ENCODE measurements at regions of chr19 and their contacts with region 1.

Region 1: GRCh38 chr19:4065430-4066175 is 1.1 kb downstream of the ZBTB7A start:
- DNase-seq: peak; percentile 97 to 99 (median 98)
- ATAC-seq: peak; percentile 89
- H3K4me3 ChIP-seq: no peak overlapping the region
- H3K4me3 Mint-ChIP-seq: peak overlapping the region; percentile 29 to 90 (median 67)
- H3K27ac ChIP-seq: peak overlapping the region; percentile 95
- H3K27ac Mint-ChIP-seq: peak overlapping the region in 6 of 9 donors; percentile 12 to 86 (median 66)
- H3K4me1 ChIP-seq: peaks cover 41 to 56% of the 10 kb centered on the region in 2 donors
- H3K4me1 Mint-ChIP-seq: peaks cover under 1 to 42% (median 26%) of the 10 kb centered on the region in 7 donors
- H3K27me3 ChIP-seq: no peaks in the 10 kb centered on the region
- H3K27me3 Mint-ChIP-seq: no peaks in the 10 kb centered on the region

Region 2: DNA sequence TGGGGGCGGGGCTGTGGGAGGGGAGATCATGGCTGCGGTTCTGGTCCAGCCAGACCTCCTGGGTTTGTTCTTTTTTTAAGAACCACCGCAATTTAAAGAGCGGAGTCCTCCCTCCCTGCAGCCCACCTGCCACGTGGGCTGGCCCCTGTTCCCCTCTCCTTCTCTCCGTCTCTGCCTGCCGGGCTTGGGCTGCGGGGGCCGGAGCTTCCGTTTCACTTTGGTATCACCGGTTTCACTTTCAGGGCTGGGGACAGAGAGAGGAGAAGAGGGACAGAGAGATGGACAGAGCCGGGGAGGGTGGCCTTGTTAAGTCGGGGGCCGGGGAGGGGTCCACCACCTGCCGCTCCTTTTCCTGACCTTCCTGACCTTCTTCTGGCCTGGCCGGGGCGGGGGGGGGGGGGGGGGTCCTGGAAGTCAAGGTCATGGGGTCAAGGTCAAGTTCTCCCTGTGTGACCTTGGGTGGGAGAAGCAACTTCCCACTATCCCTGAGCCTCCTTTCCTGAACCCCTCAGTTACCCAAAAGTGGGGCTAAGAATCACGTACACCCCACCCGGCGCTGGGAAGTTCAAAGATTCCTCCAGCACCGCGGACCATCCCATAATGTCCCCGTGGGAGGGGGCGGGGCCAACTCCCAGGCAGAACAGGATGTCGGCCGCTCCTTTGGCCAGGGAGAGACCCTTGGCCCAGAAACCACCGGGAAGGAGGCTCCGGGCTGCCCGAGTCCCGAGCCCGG is 12.4 kb after region 1 on chr19:
- CTCF ChIA-PET with region 1: no interaction called
- POLR2A ChIA-PET with region 1: interaction called, 3 read pairs
- intact Hi-C with region 1: loop called in 1 of 2 experiments (anchors 1 kb)
- DNase-seq: peak in 7 of 9 donors; percentile 35 to 70 (median 47)
- ATAC-seq: peak; percentile 71
- H3K4me3 ChIP-seq: peak overlapping the region; percentile 68
- H3K4me3 Mint-ChIP-seq: peak overlapping the region; percentile 82 to 89 (median 87)
- H3K27ac ChIP-seq: peak overlapping the region; percentile 86
- H3K27ac Mint-ChIP-seq: peak overlapping the region; percentile 85 to 97 (median 88)
- H3K4me1 ChIP-seq: peaks cover 15 to 24% of the 10 kb centered on the region in 2 donors
- H3K4me1 Mint-ChIP-seq: peaks cover 17 to 46% (median 33%) of the 10 kb centered on the region in 7 donors
- H3K27me3 ChIP-seq: no peaks in the 10 kb centered on the region
- H3K27me3 Mint-ChIP-seq: no peaks in the 10 kb centered on the region

Region 3: DNA sequence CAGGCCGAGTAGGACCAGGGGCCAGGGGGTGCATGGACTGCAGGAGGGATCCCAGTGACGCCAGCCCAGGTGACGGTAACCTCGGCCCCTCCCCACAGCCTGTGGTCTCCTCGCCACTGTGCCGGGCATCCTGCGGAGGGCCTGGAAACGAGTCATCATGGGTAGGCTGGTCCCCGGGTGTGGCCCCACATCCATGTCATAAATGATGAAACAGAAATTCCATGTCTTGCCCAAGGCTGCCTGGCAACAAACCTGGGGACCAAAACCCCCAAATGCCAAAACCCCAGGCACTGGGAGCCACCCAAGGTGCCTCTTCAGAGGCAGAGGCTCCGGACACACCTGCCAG is 37.4 kb after region 1 on chr19:
- CTCF ChIA-PET with region 1: interaction called, 6 read pairs
- POLR2A ChIA-PET with region 1: interaction called, 36 read pairs
- intact Hi-C with region 1: loop called (anchors 1 to 5 kb)
- DNase-seq: no peak
- ATAC-seq: no peak
- H3K4me3 ChIP-seq: no peak overlapping the region
- H3K4me3 Mint-ChIP-seq: peak overlapping the region in 1 of 10 donors; percentile 67
- H3K27ac ChIP-seq: no peak overlapping the region
- H3K27ac Mint-ChIP-seq: peak overlapping the region in 2 of 9 donors; percentile 64 to 85
- H3K4me1 ChIP-seq: peaks cover 22 to 33% of the 10 kb centered on the region in 2 donors
- H3K4me1 Mint-ChIP-seq: peaks cover 20 to 44% (median 32%) of the 10 kb centered on the region in 7 donors
- H3K27me3 ChIP-seq: no peaks in the 10 kb centered on the region
- H3K27me3 Mint-ChIP-seq: no peaks in the 10 kb centered on the region

Region 4: GRCh38 chr19:4115050-4115817 is 49.6 kb after region 1 on chr19:
- CTCF ChIA-PET with region 1: interaction called, 3 read pairs
- POLR2A ChIA-PET with region 1: interaction called, 10 read pairs
- intact Hi-C with region 1: no loop called
- DNase-seq: peak in 8 of 9 donors; percentile 46 to 78 (median 66)
- ATAC-seq: peak; percentile 99
- H3K4me3 ChIP-seq: no peak overlapping the region
- H3K4me3 Mint-ChIP-seq: peak overlapping the region; percentile 52 to 81 (median 72)
- H3K27ac ChIP-seq: peak overlapping the region; percentile 57
- H3K27ac Mint-ChIP-seq: peak overlapping the region; percentile 64 to 93 (median 83)
- H3K4me1 ChIP-seq: peaks cover 17 to 24% of the 10 kb centered on the region in 2 donors
- H3K4me1 Mint-ChIP-seq: peaks cover 14 to 60% (median 33%) of the 10 kb centered on the region in 7 donors
- H3K27me3 ChIP-seq: no peaks in the 10 kb centered on the region
- H3K27me3 Mint-ChIP-seq: no peaks in the 10 kb centered on the region

Region 5: DNA sequence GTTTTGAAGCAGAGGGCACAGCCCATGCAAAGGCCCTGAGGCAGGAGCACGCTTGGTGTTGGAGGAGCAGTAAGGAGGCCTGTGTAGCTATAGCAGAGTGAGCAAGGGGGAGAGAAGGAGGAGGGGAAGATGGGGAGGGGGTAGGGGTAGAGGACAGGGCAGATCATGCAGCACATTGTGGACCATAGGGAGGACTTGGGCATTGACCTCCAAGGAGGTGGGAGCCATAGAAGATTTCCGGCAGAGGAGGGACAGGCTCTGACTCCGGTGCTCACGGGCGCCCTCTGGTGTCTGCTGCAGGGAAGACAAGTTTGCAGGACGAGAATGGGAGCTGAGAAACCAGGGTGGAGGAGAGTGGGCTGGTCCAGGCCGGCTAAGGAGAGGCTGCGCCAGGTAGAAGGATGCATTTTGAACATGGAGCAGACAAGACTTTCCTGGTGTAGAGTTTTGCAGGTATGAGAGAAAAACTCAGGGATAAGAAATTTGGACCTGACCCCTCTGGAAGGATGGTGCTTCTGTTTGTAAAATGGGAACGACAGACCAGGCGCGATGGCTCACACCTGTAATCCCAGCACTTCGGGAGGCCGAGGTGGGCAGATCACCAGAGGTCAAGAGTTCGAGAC is 74.1 kb after region 1 on chr19:
- CTCF ChIA-PET with region 1: no interaction called
- POLR2A ChIA-PET with region 1: interaction called, 4 read pairs
- intact Hi-C with region 1: loop called in 1 of 2 experiments (anchors 1 kb)
- DNase-seq: peak; percentile 64 to 92 (median 82)
- ATAC-seq: peak; percentile 96
- H3K4me3 ChIP-seq: no peak overlapping the region
- H3K4me3 Mint-ChIP-seq: peak overlapping the region in 9 of 10 donors; percentile 14 to 64 (median 30)
- H3K27ac ChIP-seq: no peak overlapping the region
- H3K27ac Mint-ChIP-seq: peak overlapping the region in 1 of 9 donors; percentile 32
- H3K4me1 ChIP-seq: peaks cover 0 to 6% of the 10 kb centered on the region in 2 donors
- H3K4me1 Mint-ChIP-seq: peaks cover 5 to 11% (median 10%) of the 10 kb centered on the region in 7 donors
- H3K27me3 ChIP-seq: no peaks in the 10 kb centered on the region
- H3K27me3 Mint-ChIP-seq: peaks cover 4 to 11% (median 6%) of the 10 kb centered on the region in 5 donors

Region 6: DNA sequence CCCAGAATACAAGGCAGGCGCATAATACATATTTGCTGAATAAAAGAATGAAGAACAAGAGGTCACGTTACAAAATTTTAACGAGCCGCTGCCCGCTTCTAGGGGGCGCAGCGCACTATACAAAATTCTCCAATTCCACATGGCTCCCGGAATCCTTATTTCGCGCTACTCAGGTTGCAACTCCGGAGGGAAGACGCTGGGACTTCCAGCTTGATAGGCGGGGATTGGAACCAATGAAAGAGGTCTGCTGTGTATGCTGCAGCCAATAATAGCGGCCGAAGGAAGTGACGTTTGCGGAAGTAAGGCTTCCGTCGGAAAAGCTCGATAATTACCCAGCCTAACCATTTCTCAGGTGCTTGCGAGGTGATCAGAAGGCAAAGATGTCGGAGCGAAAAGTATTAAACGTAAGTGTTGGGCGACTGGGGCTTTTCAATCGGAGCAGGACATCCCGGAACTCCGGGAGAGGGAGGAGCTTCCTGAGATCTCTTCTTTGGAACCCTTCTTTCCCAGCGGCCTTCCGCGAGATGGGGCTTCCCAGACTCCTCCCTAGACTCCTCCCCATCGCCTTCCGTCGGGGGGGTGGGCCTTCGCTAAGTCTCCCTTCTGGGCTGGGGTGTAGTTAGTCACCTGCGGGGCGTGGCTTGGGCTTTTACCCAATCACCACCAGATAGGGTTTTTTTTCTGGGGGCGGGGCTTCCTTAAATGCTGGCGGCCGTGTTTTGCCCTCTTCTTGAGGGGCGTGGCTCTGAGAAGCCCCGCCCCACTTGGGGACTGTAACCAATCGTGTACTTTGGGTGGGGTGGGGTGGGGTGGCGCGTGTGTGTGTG is 181.4 kb after region 1 on chr19 and contains the start of gene YJU2:
- CTCF ChIA-PET with region 1: no interaction called
- POLR2A ChIA-PET with region 1: interaction called, 6 read pairs
- intact Hi-C with region 1: loop called in 1 of 2 experiments (anchors 1 kb)
- DNase-seq: peak; percentile 92 to 100 (median 99)
- ATAC-seq: peak; percentile 96
- H3K4me3 ChIP-seq: peak within 1 kb of the TSS; percentile 100
- H3K4me3 Mint-ChIP-seq: peak within 1 kb of the TSS; percentile 85 to 98 (median 96)
- H3K27ac ChIP-seq: peak within 1 kb of the TSS; percentile 99
- H3K27ac Mint-ChIP-seq: peak within 1 kb of the TSS; percentile 97 to 100 (median 99)
- H3K4me1 ChIP-seq: peaks cover 12 to 13% of the 10 kb centered on the region in 2 donors
- H3K4me1 Mint-ChIP-seq: peaks cover 10 to 33% (median 24%) of the 10 kb centered on the region in 7 donors
- H3K27me3 ChIP-seq: no peaks in the 10 kb centered on the region
- H3K27me3 Mint-ChIP-seq: peaks cover 0 to 2% (median 0%) of the 10 kb centered on the region in 5 donors
- total RNA-seq, gene YJU2: 28.5 to 42.1 (median 31.9) TPM

Measured in naive thymus-derived CD4-positive, alpha-beta T cell (primary cell).